Activated CD4-positive, alpha-beta T cell treated with anti-CD3 and anti-CD28 coated beads, Interleukin-2, amount 10 ng/mL, durations not matched to agents 24 days and 14 days (primary cell): ENCODE measurements at regions of chr2 and their contacts with region 1.

Region 1: GRCh38 chr2:239380831-239381708 is 19.8 kb downstream of the HDAC4 start:
- DNase-seq: peak; percentile 90
- H3K4me3 Mint-ChIP-seq: peak overlapping the region; percentile 81
- H3K27ac Mint-ChIP-seq: peak overlapping the region; percentile 90
- H3K4me1 Mint-ChIP-seq: peaks cover 41% of the 10 kb centered on the region
- H3K27me3 Mint-ChIP-seq: no peaks in the 10 kb centered on the region

Region 2: DNA sequence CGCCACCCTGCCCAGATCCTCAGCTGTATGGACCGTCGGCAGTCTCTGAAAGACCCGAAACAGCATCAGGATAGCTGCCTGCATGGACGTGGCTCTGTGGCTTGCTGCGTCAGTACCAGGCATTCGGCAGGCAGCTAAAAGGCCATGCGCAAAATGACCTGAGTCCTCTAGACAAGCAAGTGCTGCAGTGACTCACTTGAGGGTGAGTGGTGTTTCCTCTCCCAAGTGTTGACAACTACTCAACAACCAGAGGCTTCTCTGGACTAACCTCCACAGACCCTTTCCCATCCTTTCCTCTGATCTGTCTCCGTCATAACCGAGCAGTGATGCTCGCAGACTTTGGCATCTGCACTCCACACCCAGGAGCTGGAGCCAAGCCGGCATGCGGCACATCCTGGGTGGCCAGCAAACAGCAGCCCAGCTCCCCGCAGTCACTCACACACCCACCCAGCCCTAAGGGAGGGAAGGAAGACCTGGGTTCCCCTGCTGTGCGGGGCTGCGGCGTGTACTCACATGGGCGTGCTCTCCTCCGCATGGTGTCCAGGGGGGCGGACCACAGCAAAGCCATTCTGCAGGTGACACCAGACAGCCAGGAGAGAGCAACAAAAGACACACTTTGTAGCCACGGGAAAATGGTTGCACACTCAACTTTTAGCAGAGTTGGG is 293.9 kb before region 1 on chr2:
- intact Hi-C with region 1: no loop called
- DNase-seq: no peak
- H3K4me3 Mint-ChIP-seq: no peak overlapping the region
- H3K27ac Mint-ChIP-seq: no peak overlapping the region
- H3K4me1 Mint-ChIP-seq: no peaks in the 10 kb centered on the region
- H3K27me3 Mint-ChIP-seq: no peaks in the 10 kb centered on the region

Region 3: DNA sequence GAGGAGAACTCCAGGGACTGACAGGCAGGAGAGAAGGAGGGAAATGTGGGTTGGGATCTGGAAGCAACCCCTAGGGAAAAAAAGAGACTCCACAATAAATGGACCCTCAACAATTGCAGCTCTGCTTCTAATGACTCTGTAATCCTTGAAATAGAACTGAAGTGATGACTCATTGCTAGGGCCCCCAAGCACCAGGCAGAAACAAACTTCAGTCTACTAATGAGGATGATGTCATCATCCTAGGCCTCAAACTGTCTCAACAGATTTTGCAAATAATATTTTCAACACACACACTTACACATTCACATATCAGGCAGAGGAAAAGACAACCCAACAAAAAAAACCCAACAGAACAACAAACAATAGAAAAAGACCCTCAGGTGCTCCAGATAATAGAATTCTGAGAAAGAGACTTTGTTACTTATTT is 123.5 kb before region 1 on chr2:
- intact Hi-C with region 1: loop called (anchors 2 kb)
- DNase-seq: no peak
- H3K4me3 Mint-ChIP-seq: peak overlapping the region; percentile 78
- H3K27ac Mint-ChIP-seq: peak overlapping the region; percentile 61
- H3K4me1 Mint-ChIP-seq: peaks cover 74% of the 10 kb centered on the region
- H3K27me3 Mint-ChIP-seq: no peaks in the 10 kb centered on the region

Region 4: DNA sequence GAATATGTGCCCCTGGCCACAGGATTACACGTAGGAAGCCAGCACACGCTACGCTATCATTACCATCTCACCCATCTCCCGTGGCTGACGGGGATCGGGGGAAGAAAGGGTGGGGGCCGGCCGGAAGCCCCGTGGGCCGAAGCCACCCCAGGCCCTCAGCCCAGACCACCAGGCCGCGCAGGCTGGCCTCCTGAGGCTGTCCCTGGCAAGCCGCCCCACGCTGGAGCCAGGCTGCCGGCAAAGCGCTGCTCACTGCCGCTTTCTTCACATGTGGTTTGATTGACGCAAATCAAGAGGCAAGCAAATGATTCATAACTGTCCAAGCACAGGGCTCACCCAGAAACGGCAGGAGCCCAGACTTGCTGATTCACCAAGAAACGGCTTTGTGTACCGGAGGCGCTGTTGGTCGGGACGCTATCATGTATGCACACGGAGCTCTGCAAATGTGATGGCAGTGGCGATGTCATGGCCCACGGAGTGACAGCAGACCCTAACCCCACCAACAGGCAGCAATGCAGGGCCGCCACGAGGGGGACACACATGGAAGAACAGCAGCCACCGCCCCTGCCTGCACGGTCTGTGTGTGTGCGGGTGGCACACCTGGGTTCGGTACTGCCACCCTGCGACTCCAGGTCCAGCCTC is 105.9 kb before region 1 on chr2:
- intact Hi-C with region 1: loop called (anchors 2 kb)
- DNase-seq: peak; percentile 95
- H3K4me3 Mint-ChIP-seq: peak overlapping the region; percentile 79
- H3K27ac Mint-ChIP-seq: peak overlapping the region; percentile 87
- H3K4me1 Mint-ChIP-seq: peaks cover 70% of the 10 kb centered on the region
- H3K27me3 Mint-ChIP-seq: peaks cover 9% of the 10 kb centered on the region

Region 5: DNA sequence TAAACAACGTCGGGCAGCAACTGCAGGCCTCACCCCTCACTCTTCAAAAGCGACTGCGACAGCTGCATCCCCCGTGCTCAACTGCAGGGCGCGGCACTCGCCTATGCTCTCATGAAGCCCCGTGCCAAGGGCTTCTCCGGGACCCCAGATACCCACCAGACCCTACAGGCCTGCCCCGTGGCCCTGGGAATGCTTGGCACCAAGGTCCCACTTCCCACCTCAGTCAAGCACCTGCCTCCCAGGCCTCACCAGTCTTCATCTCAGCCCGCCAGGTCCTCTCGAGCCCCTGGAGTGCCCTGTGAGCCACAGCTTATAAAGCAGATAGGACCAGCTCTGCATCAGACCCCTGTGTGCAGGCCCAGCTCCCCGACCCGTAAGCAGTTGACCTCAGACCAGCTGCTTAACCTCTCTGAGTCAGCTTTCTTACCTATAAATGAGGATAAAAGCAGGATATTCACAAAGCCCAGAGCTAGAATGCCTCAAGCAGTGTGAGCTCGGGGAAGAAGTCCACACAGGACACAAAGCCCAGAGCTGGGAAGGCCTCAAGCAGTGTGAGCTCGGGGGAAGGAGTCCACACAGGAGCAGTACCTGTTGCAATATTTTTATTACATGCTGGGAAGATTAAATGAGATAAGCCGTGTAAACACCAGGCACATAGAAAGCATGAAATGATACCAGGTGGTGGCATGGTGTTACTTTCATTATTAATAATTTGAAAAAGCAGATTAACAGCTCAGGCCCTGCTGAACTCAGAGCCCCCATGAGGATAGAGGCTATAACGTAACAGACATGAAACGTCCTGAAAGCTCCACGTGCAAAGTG is 77.1 kb before region 1 on chr2:
- intact Hi-C with region 1: no loop called
- DNase-seq: peak; percentile 57
- H3K4me3 Mint-ChIP-seq: no peak overlapping the region
- H3K27ac Mint-ChIP-seq: no peak overlapping the region
- H3K4me1 Mint-ChIP-seq: peaks cover 33% of the 10 kb centered on the region
- H3K27me3 Mint-ChIP-seq: no peaks in the 10 kb centered on the region

Region 6: DNA sequence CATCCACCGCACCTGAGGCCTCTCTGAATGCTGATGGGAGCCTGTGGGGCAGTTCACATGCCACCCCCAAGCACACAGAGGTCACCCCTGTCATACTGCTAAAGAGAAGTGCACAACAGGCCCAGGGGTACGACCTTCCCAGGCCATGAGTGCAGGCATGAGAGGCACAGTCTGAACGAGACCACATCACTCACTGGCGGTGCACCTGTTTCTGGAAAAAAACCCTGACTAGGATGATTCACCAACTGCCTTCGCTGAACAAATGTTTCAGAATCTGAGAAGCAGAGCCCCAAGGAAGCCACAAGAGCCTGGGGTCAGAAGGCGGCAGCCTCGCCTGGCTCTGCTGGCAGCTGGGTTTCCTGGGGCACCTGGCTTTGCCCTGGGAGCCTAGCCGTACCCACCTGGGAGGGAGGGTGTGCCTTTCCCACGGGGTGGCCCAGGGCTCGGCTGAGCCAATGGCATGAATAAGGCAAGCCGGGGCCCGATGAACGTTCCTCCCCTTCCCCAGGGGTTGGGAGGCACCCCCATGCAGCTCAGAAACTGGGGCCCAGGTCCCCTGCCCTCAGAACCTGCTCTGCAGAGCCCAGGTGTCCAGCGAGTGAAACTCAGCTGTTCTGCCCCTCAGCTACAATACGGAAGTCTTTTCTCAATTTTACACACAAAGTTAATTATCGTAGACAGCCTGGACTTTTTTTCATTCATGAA is 54.1 kb before region 1 on chr2:
- intact Hi-C with region 1: loop called (anchors 1 kb)
- DNase-seq: peak; percentile 93
- H3K4me3 Mint-ChIP-seq: peak overlapping the region; percentile 75
- H3K27ac Mint-ChIP-seq: peak overlapping the region; percentile 85
- H3K4me1 Mint-ChIP-seq: peaks cover 74% of the 10 kb centered on the region
- H3K27me3 Mint-ChIP-seq: no peaks in the 10 kb centered on the region

Region 7: DNA sequence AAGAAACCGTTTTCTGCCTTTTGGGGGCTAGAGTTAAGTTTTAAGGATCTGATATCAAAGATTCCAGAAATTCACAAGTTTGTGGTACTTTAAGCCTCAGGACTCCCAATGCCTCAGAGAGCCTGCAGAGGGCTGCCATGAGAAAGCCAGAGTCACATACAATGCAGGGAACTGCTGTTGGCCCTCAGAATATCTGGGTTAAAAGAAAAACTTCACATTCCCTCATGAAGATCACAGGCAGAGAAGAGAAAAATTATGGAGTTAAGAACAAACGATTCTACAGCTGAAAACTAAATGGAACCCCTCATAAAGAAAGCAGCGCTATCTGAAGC is 19.8 kb before region 1 on chr2:
- intact Hi-C with region 1: no loop called
- DNase-seq: no peak
- H3K4me3 Mint-ChIP-seq: no peak overlapping the region
- H3K27ac Mint-ChIP-seq: no peak overlapping the region
- H3K4me1 Mint-ChIP-seq: peaks cover 13% of the 10 kb centered on the region
- H3K27me3 Mint-ChIP-seq: no peaks in the 10 kb centered on the region

Region 8: GRCh38 chr2:239401067-239401880 is 20.2 kb after region 1 on chr2:
- intact Hi-C with region 1: loop called (anchors 1 kb)
- DNase-seq: peak; percentile 100
- H3K4me3 Mint-ChIP-seq: peak overlapping the region; percentile 93
- H3K27ac Mint-ChIP-seq: peak overlapping the region; percentile 99
- H3K4me1 Mint-ChIP-seq: peaks cover 45% of the 10 kb centered on the region
- H3K27me3 Mint-ChIP-seq: peaks cover 20% of the 10 kb centered on the region